ENCODE measurements at regions of chr15 and their contacts with region 1.

Region 1: GRCh38 chr15:101242160-101242998 is 9.5 kb downstream of the CHSY1 start:
- DNase-seq: no peak
- ATAC-seq: peak; percentile 80
- H3K4me3 ChIP-seq: no peak overlapping the region
- H3K27ac ChIP-seq: peak overlapping the region; percentile 25
- H3K4me1 ChIP-seq: peaks cover 77% of the 10 kb centered on the region
- H3K27me3 ChIP-seq: no peaks in the 10 kb centered on the region
- CTCF ChIP-seq: no peak

Region 2: GRCh38 chr15:101188637-101189408 is 53.6 kb before region 1 on chr15:
- intact Hi-C with region 1: loop called (anchors 10 kb)
- DNase-seq: no peak
- ATAC-seq: no peak
- H3K4me3 ChIP-seq: peak overlapping the region; percentile 38
- H3K27ac ChIP-seq: peak overlapping the region; percentile 70
- H3K4me1 ChIP-seq: peaks cover 79% of the 10 kb centered on the region
- H3K27me3 ChIP-seq: no peaks in the 10 kb centered on the region
- CTCF ChIP-seq: no peak

Region 3: GRCh38 chr15:101200181-101200580 is 42.2 kb before region 1 on chr15:
- intact Hi-C with region 1: no loop called
- DNase-seq: no peak
- ATAC-seq: no peak
- H3K4me3 ChIP-seq: no peak overlapping the region
- H3K27ac ChIP-seq: peak overlapping the region; percentile 53
- H3K4me1 ChIP-seq: peaks cover 58% of the 10 kb centered on the region
- H3K27me3 ChIP-seq: no peaks in the 10 kb centered on the region
- CTCF ChIP-seq: no peak

Region 4: GRCh38 chr15:101348643-101349548 is 106.5 kb after region 1 on chr15:
- intact Hi-C with region 1: no loop called
- DNase-seq: peak; percentile 2
- ATAC-seq: peak; percentile 87
- H3K4me3 ChIP-seq: no peak overlapping the region
- H3K27ac ChIP-seq: no peak overlapping the region
- H3K4me1 ChIP-seq: no peaks in the 10 kb centered on the region
- H3K27me3 ChIP-seq: no peaks in the 10 kb centered on the region
- CTCF ChIP-seq: no peak